Aorta (tissue), 5 donors: ENCODE measurements at regions of chr9 and their contacts with region 1.

Region 1: GRCh38 chr9:2570615-2571479 is 50.7 kb upstream of the VLDLR start:
- DNase-seq: peak; percentile 90 to 91
- ATAC-seq: peak; percentile 75
- H3K4me3 ChIP-seq: no peak overlapping the region
- H3K27ac ChIP-seq: peak overlapping the region in 1 of 2 donors; percentile 2
- H3K4me1 ChIP-seq: peaks cover 0 to 2% of the 10 kb centered on the region in 2 donors
- H3K27me3 ChIP-seq: no peaks in the 10 kb centered on the region

Region 2: DNA sequence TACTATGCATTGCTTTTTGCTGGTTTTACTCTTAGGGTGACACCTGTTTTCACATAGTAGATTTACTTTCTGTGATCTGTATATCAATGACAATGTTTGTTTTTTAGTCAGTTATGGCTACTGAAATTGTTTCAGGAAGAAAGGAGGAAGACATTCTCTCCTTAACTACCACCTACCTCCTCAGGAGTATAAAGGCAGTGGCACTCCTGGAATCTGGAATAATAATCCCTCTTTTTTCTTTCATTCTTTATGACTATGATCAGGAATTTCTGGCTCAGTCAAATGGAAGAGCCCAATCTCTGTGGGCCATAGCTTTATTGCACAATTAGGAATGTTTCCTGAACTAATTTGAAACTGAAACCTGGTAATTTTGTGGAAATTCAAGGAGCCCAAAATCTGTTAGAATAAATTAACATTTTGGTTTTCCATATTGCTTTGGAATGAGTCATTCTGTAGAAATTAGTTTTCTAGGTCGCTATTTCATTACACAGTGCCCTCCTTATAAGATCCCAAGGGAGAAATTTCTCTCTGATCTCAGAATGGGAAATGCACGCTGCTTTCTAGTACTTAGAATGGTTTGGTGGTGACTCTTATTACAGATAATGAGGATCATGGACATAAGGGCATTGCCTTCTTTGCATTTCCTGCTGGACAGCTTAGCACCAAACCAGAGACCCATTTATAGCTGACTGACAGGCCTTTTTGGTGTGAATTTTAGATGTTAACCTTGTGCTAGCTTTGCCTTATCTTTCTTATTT is 44.6 kb before region 1 on chr9:
- intact Hi-C with region 1: no loop called
- DNase-seq: no peak
- ATAC-seq: no peak
- H3K4me3 ChIP-seq: no peak overlapping the region
- H3K27ac ChIP-seq: no peak overlapping the region
- H3K4me1 ChIP-seq: no peaks in the 10 kb centered on the region
- H3K27me3 ChIP-seq: no peaks in the 10 kb centered on the region

Region 3: DNA sequence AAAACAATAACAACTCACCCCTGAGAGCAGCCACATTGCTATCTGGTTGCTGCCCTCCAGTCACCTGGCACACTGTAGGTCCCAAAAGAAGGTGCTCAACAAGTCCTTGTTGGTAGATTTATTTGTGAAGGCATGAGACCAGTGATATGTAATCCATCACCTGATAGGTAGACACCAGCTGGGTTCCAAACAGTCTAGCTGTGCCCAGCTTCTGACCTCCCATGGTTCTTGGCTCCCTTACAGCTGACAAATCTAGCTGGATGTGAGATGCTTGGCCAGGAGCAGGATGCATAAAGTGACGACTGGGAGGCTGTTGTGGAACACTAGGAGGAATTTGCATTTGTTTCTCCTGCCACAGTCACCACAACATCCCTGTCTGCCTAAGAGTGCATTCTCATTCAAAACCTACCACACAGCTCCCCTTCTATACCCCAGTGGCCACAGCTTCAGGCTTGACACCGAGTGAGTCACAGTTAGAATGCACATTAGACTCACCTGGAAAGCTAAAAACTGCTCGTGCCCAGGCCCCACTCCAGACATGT is 43.0 kb after region 1 on chr9:
- intact Hi-C with region 1: loop called in 1 of 2 experiments (anchors 5 kb)
- DNase-seq: no peak
- ATAC-seq: no peak
- H3K4me3 ChIP-seq: no peak overlapping the region
- H3K27ac ChIP-seq: no peak overlapping the region
- H3K4me1 ChIP-seq: no peaks in the 10 kb centered on the region
- H3K27me3 ChIP-seq: no peaks in the 10 kb centered on the region